ENCODE measurements at regions of chr7 and their contacts with region 1.

Region 1: GRCh38 chr7:9231630-9232121 is 798.3 kb downstream of the NXPH1 start:
- DNase-seq: no peak
- H3K4me3 Mint-ChIP-seq: no peak overlapping the region
- H3K27ac Mint-ChIP-seq: no peak overlapping the region
- H3K4me1 Mint-ChIP-seq: no peaks in the 10 kb centered on the region
- H3K27me3 Mint-ChIP-seq: no peaks in the 10 kb centered on the region

Region 2: GRCh38 chr7:9241826-9242225 is 10.2 kb after region 1 on chr7:
- intact Hi-C with region 1: loop called (anchors 1 kb)
- DNase-seq: no peak
- H3K4me3 Mint-ChIP-seq: no peak overlapping the region
- H3K27ac Mint-ChIP-seq: no peak overlapping the region
- H3K4me1 Mint-ChIP-seq: no peaks in the 10 kb centered on the region
- H3K27me3 Mint-ChIP-seq: no peaks in the 10 kb centered on the region